Right cardiac atrium (tissue), 5 donors: ENCODE measurements at regions of chr18 and their contacts with region 1.

Region 1: GRCh38 chr18:62425465-62426195 is 97.2 kb upstream of the ZCCHC2 start:
- DNase-seq: peak; percentile 65 to 79 (median 75)
- ATAC-seq: peak; percentile 87 to 92
- H3K4me3 ChIP-seq: peak overlapping the region; percentile 47
- H3K27ac ChIP-seq: peak overlapping the region; percentile 99
- H3K4me1 ChIP-seq: no peaks in the 10 kb centered on the region
- H3K27me3 ChIP-seq: no peaks in the 10 kb centered on the region

Region 2: DNA sequence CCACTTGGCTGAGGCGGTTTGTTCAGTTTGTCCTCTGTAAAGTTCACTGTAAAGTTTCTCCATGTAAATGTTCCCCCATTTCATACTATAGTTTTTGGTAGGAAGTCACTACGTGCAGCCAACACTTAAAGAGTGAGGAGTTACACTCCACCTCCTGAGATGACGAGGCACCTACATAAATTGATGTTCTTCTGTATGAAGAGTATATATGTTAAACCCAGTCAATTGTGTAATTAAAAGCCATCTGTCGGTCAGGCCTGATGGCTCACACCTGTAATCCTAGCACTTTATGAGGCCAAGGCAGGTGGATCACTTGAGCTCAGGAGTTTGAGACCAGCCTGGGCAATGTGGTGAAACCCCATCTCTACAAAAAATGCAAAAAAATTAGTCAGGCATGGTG is 246.4 kb before region 1 on chr18:
- intact Hi-C with region 1: no loop called
- DNase-seq: no peak
- ATAC-seq: no peak
- H3K4me3 ChIP-seq: no peak overlapping the region
- H3K27ac ChIP-seq: no peak overlapping the region
- H3K4me1 ChIP-seq: peaks cover 2% of the 10 kb centered on the region
- H3K27me3 ChIP-seq: no peaks in the 10 kb centered on the region

Region 3: DNA sequence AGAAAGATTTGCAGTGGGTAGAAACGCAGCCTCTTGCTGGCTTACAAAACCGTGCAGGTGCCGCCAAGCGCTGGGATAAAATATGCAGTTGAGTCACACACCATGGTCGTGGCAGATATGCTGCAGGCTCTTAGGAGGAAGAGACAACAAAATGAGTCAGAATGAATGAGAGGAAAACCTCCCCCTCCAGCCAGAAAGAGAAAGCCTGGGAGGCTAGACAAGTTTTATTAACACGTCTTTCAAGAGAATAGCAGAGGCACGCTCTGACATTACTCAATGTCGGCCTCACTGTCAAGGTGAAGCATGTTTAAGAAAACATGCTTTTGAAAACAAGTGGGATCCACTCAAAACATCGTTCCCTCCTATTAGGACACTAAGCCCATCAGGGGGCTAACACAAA is 60.1 kb after region 1 on chr18:
- intact Hi-C with region 1: no loop called
- DNase-seq: no peak
- ATAC-seq: no peak
- H3K4me3 ChIP-seq: no peak overlapping the region
- H3K27ac ChIP-seq: no peak overlapping the region
- H3K4me1 ChIP-seq: no peaks in the 10 kb centered on the region
- H3K27me3 ChIP-seq: no peaks in the 10 kb centered on the region

Region 4: GRCh38 chr18:62522504-62523254 is 97.0 kb after region 1 on chr18 and contains the start of gene ZCCHC2:
- intact Hi-C with region 1: loop called in 3 of 4 experiments (anchors 5 kb)
- DNase-seq: peak; percentile 98 to 99 (median 99)
- ATAC-seq: peak; percentile 91 to 93
- H3K4me3 ChIP-seq: peak within 1 kb of the TSS; percentile 87
- H3K27ac ChIP-seq: peak within 1 kb of the TSS; percentile 91
- H3K4me1 ChIP-seq: no peaks in the 10 kb centered on the region
- H3K27me3 ChIP-seq: no peaks in the 10 kb centered on the region
- total RNA-seq, gene ZCCHC2: 14.0 to 21.7 (median 18.4) TPM

Region 5: GRCh38 chr18:62576845-62577512 is 151.3 kb after region 1 on chr18:
- intact Hi-C with region 1: loop called in 2 of 4 experiments (anchors 5 kb)
- DNase-seq: no peak
- ATAC-seq: no peak
- H3K4me3 ChIP-seq: no peak overlapping the region
- H3K27ac ChIP-seq: no peak overlapping the region
- H3K4me1 ChIP-seq: no peaks in the 10 kb centered on the region
- H3K27me3 ChIP-seq: no peaks in the 10 kb centered on the region

Region 6: GRCh38 chr18:62584241-62585120 is 158.9 kb after region 1 on chr18:
- intact Hi-C with region 1: loop called in 3 of 4 experiments (anchors 2 to 5 kb)
- DNase-seq: peak; percentile 80 to 94 (median 91)
- ATAC-seq: peak; percentile 85 to 87
- H3K4me3 ChIP-seq: no peak overlapping the region
- H3K27ac ChIP-seq: no peak overlapping the region
- H3K4me1 ChIP-seq: no peaks in the 10 kb centered on the region
- H3K27me3 ChIP-seq: no peaks in the 10 kb centered on the region

Region 7: DNA sequence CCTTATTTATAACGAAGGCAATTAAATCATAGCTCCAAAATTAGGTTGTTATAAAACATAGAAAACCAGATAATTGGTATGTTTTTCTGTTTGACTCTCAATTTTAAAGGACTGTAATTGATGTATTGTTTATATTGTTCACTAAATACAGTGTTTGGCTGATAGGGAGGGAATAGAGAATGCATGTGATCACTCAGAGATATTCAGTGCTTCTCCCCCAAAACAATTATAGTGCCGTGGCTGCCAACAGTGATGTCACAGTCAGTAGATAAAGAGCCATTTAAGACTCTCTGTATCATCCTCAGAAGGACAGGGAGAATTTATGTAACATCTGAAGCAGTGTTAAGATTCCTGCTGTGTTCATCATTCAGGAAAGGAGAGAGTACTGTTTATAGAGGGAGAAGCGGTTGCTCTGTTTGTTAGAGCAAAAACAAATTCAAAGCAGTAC is 359.4 kb after region 1 on chr18:
- intact Hi-C with region 1: no loop called
- DNase-seq: peak in 2 of 3 donors; percentile 22 to 67
- ATAC-seq: peak; percentile 33 to 64
- H3K4me3 ChIP-seq: no peak overlapping the region
- H3K27ac ChIP-seq: no peak overlapping the region
- H3K4me1 ChIP-seq: peaks cover 6% of the 10 kb centered on the region
- H3K27me3 ChIP-seq: no peaks in the 10 kb centered on the region